ENCODE measurements at regions of chr20 and their contacts with region 1.

Region 1: GRCh38 chr20:34022154-34022838 is 28.6 kb downstream of the RALY start:
- DNase-seq: peak; percentile 57
- ATAC-seq: peak; percentile 74
- H3K4me3 ChIP-seq: no peak overlapping the region
- H3K27ac ChIP-seq: no peak overlapping the region
- H3K4me1 ChIP-seq: 0 out of 2 replicates have a peak, but pooled peaks cover 8% of the 10 kb centered on the region
- H3K27me3 ChIP-seq: no peaks in the 10 kb centered on the region
- CTCF ChIP-seq: peak; percentile 63

Region 2: DNA sequence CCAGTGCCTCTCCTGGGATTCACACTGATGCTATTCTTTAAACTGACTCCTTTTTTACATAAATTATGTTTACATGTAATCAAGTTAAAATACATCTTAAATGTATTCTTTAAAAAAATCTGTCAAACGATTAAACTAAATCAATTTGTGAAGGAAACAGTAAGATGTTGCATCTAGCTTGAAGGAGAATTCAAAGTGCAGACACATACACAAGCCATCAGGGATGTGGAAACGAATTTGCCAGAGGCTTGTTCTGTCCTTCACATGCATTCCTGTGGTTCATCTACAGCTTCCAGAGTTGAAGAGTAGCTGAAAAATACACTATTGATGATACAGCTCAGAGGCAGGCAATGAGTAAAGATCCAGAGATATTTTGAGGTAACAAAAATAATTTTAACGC is 975.9 kb before region 1 on chr20:
- CTCF ChIA-PET with region 1: no interaction called
- POLR2A ChIA-PET with region 1: no interaction called
- intact Hi-C with region 1: no loop called
- DNase-seq: no peak
- ATAC-seq: no peak
- H3K4me3 ChIP-seq: no peak overlapping the region
- H3K27ac ChIP-seq: no peak overlapping the region
- H3K4me1 ChIP-seq: no peaks in the 10 kb centered on the region
- H3K27me3 ChIP-seq: peaks cover 15% of the 10 kb centered on the region; the same call in 1 of the 2 replicates
- CTCF ChIP-seq: no peak

Region 3: GRCh38 chr20:33862709-33863403 is 159.4 kb before region 1 on chr20:
- CTCF ChIA-PET with region 1: interaction called, 13 read pairs
- POLR2A ChIA-PET with region 1: no interaction called
- intact Hi-C with region 1: loop called (anchors 2 kb)
- DNase-seq: peak; percentile 49
- ATAC-seq: peak; percentile 69
- H3K4me3 ChIP-seq: peak overlapping the region; percentile 35; the same call in 1 of the 2 replicates
- H3K27ac ChIP-seq: no peak overlapping the region
- H3K4me1 ChIP-seq: peaks cover 4% of the 10 kb centered on the region; the same call in 1 of the 2 replicates
- H3K27me3 ChIP-seq: no peaks in the 10 kb centered on the region
- CTCF ChIP-seq: peak; percentile 88

Region 4: DNA sequence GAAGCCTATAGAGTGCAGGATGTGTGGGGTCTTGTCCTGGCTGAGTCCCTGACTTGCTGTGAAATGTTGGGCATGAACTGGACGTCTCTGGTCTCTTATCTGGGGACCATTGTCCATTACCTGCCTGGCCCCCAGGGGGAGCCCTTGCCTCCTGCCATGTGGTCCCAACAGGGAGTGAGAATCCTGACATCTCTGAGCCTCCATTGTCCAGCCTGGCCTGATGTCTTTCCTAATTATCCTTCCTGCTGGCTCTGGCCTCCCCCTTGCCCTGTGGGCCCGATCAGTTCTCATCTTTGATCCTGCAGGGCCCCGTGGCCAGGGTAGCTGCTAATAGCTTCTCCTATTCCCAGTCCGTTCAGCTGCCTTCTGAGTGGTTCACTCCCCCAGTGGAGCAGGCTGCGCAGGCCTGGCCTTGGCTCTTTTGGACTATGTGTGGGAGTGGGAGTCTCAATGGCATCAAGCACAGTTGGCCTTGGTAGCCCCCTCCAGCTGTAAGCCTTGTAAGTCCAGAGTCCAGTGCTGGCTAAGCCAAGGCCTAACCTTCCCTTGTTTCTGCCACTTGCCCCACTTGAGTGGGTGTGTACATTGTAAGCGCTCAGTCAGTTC is 106.5 kb before region 1 on chr20:
- CTCF ChIA-PET with region 1: no interaction called
- POLR2A ChIA-PET with region 1: no interaction called
- intact Hi-C with region 1: loop called (anchors 5 kb)
- DNase-seq: peak; percentile 51
- ATAC-seq: peak; percentile 68
- H3K4me3 ChIP-seq: no peak overlapping the region
- H3K27ac ChIP-seq: no peak overlapping the region
- H3K4me1 ChIP-seq: 0 out of 2 replicates have a peak, but pooled peaks cover 4% of the 10 kb centered on the region
- H3K27me3 ChIP-seq: no peaks in the 10 kb centered on the region
- CTCF ChIP-seq: peak; percentile 74

Region 5: GRCh38 chr20:33963751-33964150 is 58.5 kb before region 1 on chr20:
- CTCF ChIA-PET with region 1: no interaction called
- POLR2A ChIA-PET with region 1: no interaction called
- intact Hi-C with region 1: no loop called
- DNase-seq: no peak
- ATAC-seq: no peak
- H3K4me3 ChIP-seq: no peak overlapping the region
- H3K27ac ChIP-seq: no peak overlapping the region
- H3K4me1 ChIP-seq: no peaks in the 10 kb centered on the region
- H3K27me3 ChIP-seq: no peaks in the 10 kb centered on the region
- CTCF ChIP-seq: no peak

Measured in PC-3 (cell line).